Naive thymus-derived CD4-positive, alpha-beta T cell (primary cell): ENCODE measurements at regions of chr3 and their contacts with region 1.

Region 1: GRCh38 chr3:172039436-172040077 is at the start of gene FNDC3B:
- DNase-seq: peak; percentile 76 to 92 (median 89)
- ATAC-seq: peak; percentile 96
- H3K4me3 ChIP-seq: peak within 1 kb of the TSS; percentile 64
- H3K4me3 Mint-ChIP-seq: peak within 1 kb of the TSS; percentile 96 to 100 (median 98)
- H3K27ac ChIP-seq: peak within 1 kb of the TSS; percentile 97
- H3K27ac Mint-ChIP-seq: peak within 1 kb of the TSS; percentile 94 to 99 (median 97)
- H3K4me1 ChIP-seq: peaks cover 11 to 15% of the 10 kb centered on the region in 2 donors
- H3K4me1 Mint-ChIP-seq: peaks cover 27 to 73% (median 55%) of the 10 kb centered on the region in 7 donors
- H3K27me3 ChIP-seq: no peaks in the 10 kb centered on the region
- H3K27me3 Mint-ChIP-seq: peaks cover 0 to 19% (median 0%) of the 10 kb centered on the region in 5 donors
- total RNA-seq, gene FNDC3B: 21.1 to 78.6 (median 29.4) TPM

Region 2: DNA sequence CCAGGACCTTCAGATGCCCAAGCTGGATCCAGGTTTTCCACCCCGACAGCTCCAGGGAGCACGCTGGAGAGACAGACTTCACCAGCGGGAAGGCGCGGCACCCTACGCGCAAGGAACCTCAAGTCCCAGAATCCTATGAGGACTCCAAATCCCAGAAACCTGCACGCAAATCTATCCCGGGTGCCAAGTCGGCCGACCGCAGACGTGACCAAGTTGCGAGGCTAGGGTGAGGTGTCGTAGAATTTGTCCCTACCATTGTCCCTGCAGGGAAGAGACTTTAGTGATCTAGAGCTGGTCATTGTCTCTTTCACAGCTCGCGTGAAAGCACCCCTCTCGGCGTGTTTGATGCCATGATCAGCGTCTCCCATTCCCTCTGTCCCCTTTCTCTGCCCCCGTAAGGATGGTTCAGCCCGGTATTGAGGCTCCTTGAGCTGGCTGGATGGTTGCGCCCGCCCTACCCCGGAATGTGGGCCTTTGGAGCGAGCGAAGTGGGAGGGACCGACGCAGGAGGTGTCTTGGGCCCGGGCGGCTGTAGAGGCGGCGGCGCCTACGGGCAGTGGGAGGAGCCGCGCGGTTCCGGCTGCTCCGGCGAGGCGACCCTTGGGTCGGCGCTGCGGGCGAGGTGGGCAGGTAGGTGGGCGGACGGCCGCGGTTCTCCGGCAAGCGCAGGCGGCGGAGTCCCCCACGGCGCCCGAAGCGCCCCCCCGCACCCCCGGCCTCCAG is 1817.5 kb before region 1 on chr3 and contains the start of gene PRKCI:
- CTCF ChIA-PET with region 1: no interaction called
- POLR2A ChIA-PET with region 1: no interaction called
- intact Hi-C with region 1: loop called in 1 of 2 experiments (anchors 10 kb)
- DNase-seq: peak; percentile 63 to 88 (median 83)
- ATAC-seq: peak; percentile 96
- H3K4me3 ChIP-seq: peak within 1 kb of the TSS; percentile 98
- H3K4me3 Mint-ChIP-seq: peak within 1 kb of the TSS; percentile 75 to 97 (median 95)
- H3K27ac ChIP-seq: peak within 1 kb of the TSS; percentile 75
- H3K27ac Mint-ChIP-seq: peak within 1 kb of the TSS; percentile 82 to 97 (median 95)
- H3K4me1 ChIP-seq: peaks cover 0 to 3% of the 10 kb centered on the region in 2 donors
- H3K4me1 Mint-ChIP-seq: peaks cover 15 to 50% (median 38%) of the 10 kb centered on the region in 7 donors
- H3K27me3 ChIP-seq: no peaks in the 10 kb centered on the region
- H3K27me3 Mint-ChIP-seq: peaks cover 0 to 4% (median 0%) of the 10 kb centered on the region in 5 donors
- total RNA-seq, gene PRKCI: 14.7 to 26.2 (median 20.5) TPM

Region 3: DNA sequence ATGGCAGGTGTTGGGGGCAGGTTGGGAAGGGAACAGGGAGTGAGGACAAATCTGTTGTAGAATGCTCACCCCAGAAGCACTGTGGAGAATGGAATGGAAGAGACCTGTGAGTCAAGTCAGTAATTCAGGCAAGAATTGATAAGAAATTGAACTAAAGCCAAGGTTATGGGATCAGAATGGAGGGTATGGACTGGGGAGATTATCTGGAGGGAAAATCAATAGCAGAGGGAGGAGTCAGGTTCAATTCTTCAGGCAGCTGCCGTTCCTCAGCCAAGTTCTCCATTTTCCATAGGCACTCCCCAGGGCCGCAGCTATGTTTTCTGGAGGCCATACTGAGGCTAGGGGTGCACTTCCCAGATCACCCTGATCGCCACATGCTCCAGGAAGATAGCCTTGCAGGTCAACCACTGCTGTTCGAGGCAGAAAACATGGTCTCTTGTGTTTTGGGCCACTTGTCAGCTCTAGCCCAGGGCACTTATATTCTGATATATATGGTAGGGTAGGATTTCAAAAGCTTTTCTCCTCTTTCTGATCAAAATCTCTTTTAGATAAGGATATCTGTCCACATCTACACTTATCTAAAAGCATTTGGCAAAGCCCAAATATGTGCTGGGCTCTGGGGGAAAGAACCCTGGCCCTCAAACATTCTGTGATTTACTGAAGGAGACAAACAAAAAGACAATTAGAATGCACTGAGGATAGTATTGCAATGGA is 104.1 kb before region 1 on chr3:
- CTCF ChIA-PET with region 1: no interaction called
- POLR2A ChIA-PET with region 1: no interaction called
- intact Hi-C with region 1: loop called in 1 of 2 experiments (anchors 1 kb)
- DNase-seq: no peak
- ATAC-seq: peak; percentile 53
- H3K4me3 ChIP-seq: no peak overlapping the region
- H3K4me3 Mint-ChIP-seq: no peak overlapping the region
- H3K27ac ChIP-seq: no peak overlapping the region
- H3K27ac Mint-ChIP-seq: no peak overlapping the region
- H3K4me1 ChIP-seq: no peaks in the 10 kb centered on the region
- H3K4me1 Mint-ChIP-seq: peaks cover 0 to 7% (median 0%) of the 10 kb centered on the region in 7 donors
- H3K27me3 ChIP-seq: no peaks in the 10 kb centered on the region
- H3K27me3 Mint-ChIP-seq: peaks cover 0 to 14% (median 2%) of the 10 kb centered on the region in 5 donors

Region 4: DNA sequence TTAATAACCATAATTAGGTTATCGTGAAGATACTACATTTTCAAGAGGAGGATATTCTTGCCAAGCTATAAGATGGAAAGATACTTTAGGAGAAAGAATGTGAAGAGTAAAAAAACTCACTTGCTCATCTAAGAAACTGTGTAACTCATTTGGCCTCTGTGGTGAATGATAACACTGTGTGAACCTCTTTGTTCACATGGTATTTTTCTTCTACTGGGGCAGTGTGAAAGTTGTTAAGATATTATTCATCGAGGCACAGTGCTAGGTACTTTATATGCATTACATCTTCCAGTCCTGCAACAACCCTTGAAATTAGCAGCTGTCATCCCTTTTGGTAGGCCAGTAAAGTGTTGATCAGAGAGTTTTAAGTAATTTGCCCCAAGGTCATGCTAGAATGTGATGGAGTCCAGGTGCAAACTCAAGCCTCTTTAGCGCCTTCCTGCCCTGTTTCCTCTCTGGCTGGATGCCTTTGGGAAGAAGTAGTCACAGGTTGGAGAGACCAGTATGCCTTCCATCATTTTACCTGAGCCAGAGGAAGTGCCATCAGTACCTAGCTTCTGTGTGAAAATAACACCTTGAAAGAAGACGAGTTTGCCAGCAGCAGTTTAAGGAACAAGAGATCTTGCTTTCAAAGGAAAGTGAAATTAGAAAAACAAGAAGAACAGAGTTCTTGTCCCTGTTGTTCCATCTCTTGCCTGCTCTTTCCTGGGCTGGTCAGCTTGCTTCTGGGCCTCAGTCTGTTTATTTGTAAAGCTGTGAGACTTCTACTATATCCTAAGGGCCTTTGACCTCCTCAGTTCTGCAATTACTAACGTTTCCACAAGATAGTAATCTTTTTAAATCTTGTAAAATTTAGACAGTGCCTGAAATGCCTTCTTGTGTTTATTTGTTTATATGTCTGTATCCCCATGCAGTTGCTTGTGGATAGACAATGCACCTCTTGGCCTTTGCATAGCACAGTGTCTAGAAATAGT is 179.1 kb after region 1 on chr3:
- CTCF ChIA-PET with region 1: no interaction called
- POLR2A ChIA-PET with region 1: no interaction called
- intact Hi-C with region 1: loop called in 1 of 2 experiments (anchors 5 kb)
- DNase-seq: no peak
- ATAC-seq: no peak
- H3K4me3 ChIP-seq: no peak overlapping the region
- H3K4me3 Mint-ChIP-seq: no peak overlapping the region
- H3K27ac ChIP-seq: no peak overlapping the region
- H3K27ac Mint-ChIP-seq: no peak overlapping the region
- H3K4me1 ChIP-seq: no peaks in the 10 kb centered on the region
- H3K4me1 Mint-ChIP-seq: peaks cover 8 to 55% (median 39%) of the 10 kb centered on the region in 7 donors
- H3K27me3 ChIP-seq: no peaks in the 10 kb centered on the region
- H3K27me3 Mint-ChIP-seq: no peaks in the 10 kb centered on the region

Region 5: GRCh38 chr3:172332256-172333041 is 292.9 kb after region 1 on chr3:
- CTCF ChIA-PET with region 1: interaction called, 20 read pairs
- POLR2A ChIA-PET with region 1: interaction called, 3 read pairs
- intact Hi-C with region 1: loop called (anchors 1 to 2 kb)
- DNase-seq: peak; percentile 3 to 55 (median 41)
- ATAC-seq: peak; percentile 92
- H3K4me3 ChIP-seq: no peak overlapping the region
- H3K4me3 Mint-ChIP-seq: no peak overlapping the region
- H3K27ac ChIP-seq: no peak overlapping the region
- H3K27ac Mint-ChIP-seq: peak overlapping the region in 2 of 9 donors; percentile 12 to 36
- H3K4me1 ChIP-seq: no peaks in the 10 kb centered on the region
- H3K4me1 Mint-ChIP-seq: peaks cover 0 to 10% (median 4%) of the 10 kb centered on the region in 7 donors
- H3K27me3 ChIP-seq: no peaks in the 10 kb centered on the region
- H3K27me3 Mint-ChIP-seq: no peaks in the 10 kb centered on the region

Region 6: DNA sequence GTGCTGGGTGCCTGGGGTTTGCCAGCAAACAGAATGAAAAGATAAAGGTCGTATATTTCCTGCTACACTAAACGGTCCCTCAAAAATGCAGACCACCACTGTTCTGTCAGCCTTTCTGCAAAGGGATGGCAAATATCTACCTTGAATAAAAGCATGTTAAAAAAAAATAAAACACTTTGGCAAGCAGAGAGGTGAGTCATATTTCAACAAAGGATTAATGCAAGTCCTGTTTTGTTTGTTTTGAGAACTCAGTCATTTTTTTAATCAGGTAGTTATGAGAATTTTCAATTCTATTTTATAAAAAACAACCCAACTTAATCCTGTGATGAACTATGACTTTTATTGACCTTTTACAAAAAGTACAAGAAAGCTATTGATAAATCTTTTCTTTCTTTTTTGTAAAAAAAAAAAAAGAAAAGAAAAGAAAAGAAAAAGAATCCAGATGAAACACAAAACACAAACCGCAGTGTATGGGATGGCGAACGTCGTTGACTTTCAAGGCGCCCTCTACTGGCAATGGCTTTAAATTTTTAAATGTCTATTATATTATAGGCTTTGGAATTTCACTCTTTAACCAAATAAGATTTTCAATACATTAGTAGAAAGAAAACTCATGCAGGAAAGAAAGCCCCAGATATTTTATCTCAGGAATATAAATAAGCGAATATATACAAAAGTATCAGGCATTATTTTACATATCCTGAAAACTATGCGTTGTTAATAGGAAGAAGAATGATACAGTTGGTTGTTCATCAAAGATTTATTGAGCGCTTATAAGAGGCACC is 583.6 kb after region 1 on chr3:
- CTCF ChIA-PET with region 1: no interaction called
- POLR2A ChIA-PET with region 1: no interaction called
- intact Hi-C with region 1: loop called in 1 of 2 experiments (anchors 5 kb)
- DNase-seq: peak in 7 of 9 donors; percentile 16 to 48 (median 34)
- ATAC-seq: peak; percentile 75
- H3K4me3 ChIP-seq: no peak overlapping the region
- H3K4me3 Mint-ChIP-seq: peak overlapping the region in 8 of 10 donors; percentile 37 to 71 (median 50)
- H3K27ac ChIP-seq: no peak overlapping the region
- H3K27ac Mint-ChIP-seq: no peak overlapping the region
- H3K4me1 ChIP-seq: no peaks in the 10 kb centered on the region
- H3K4me1 Mint-ChIP-seq: peaks cover 0 to 12% (median 6%) of the 10 kb centered on the region in 7 donors
- H3K27me3 ChIP-seq: no peaks in the 10 kb centered on the region
- H3K27me3 Mint-ChIP-seq: no peaks in the 10 kb centered on the region